HepG2 (cell line): ENCODE measurements at regions of chr14 and their contacts with region 1.

Region 1: GRCh38 chr14:59360923-59361794 is 104.0 kb downstream of the GPR135 start:
- DNase-seq: peak; percentile 59
- ATAC-seq: peak; percentile 96
- H3K4me3 ChIP-seq: no peak overlapping the region
- H3K27ac ChIP-seq: no peak overlapping the region
- H3K4me1 ChIP-seq: peaks cover 10% of the 10 kb centered on the region
- H3K27me3 ChIP-seq: no peaks in the 10 kb centered on the region
- CTCF ChIP-seq: no peak
- EP300 ChIP-seq: peak in 1 of 2 experiments; percentile 22; a peak in 1 of 4 replicates
- POLR2A ChIP-seq: no peak
- RAD21 ChIP-seq: no peak

Region 2: GRCh38 chr14:59407246-59408010 is 46.3 kb after region 1 on chr14:
- CTCF ChIA-PET with region 1: no interaction called
- POLR2A ChIA-PET with region 1: no interaction called
- in situ Hi-C with region 1: no loop called
- intact Hi-C with region 1: loop called (anchors 5 kb)
- DNase-seq: peak; percentile 26
- ATAC-seq: peak; percentile 60
- H3K4me3 ChIP-seq: no peak overlapping the region
- H3K27ac ChIP-seq: peak overlapping the region; percentile 51
- H3K4me1 ChIP-seq: peaks cover 34% of the 10 kb centered on the region
- H3K27me3 ChIP-seq: no peaks in the 10 kb centered on the region
- CTCF ChIP-seq: no peak
- EP300 ChIP-seq: no peak
- POLR2A ChIP-seq: no peak
- RAD21 ChIP-seq: no peak

Region 3: DNA sequence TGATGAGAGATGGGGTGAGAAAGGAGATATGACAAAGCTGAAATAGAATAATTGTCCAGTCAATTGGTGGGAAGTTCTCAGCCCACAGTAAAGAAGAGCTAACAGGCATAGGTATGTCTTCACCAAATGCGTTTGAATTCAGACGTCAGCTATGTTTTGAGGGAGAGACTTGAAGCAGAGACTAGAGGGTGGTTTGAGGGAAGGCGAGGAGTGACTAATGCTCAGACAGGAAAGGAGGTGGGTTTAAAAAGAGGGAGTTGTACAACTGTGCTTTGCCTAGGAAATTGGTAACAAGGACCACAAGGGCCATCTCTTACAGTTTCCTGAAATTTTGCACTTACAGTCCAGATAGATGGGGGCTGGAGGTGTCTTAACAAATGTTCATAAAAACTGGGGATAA is 129.6 kb after region 1 on chr14:
- CTCF ChIA-PET with region 1: no interaction called
- POLR2A ChIA-PET with region 1: no interaction called
- in situ Hi-C with region 1: no loop called
- intact Hi-C with region 1: no loop called
- DNase-seq: no peak
- ATAC-seq: no peak
- H3K4me3 ChIP-seq: no peak overlapping the region
- H3K27ac ChIP-seq: no peak overlapping the region
- H3K4me1 ChIP-seq: peaks cover 9% of the 10 kb centered on the region
- H3K27me3 ChIP-seq: no peaks in the 10 kb centered on the region
- CTCF ChIP-seq: no peak
- EP300 ChIP-seq: no peak
- POLR2A ChIP-seq: no peak
- RAD21 ChIP-seq: no peak